ENCODE measurements at regions of chr5 and their contacts with region 1.

Region 1: GRCh38 chr5:146213210-146213826 is 9.9 kb downstream of the RBM27 start:
- DNase-seq: no peak
- ATAC-seq: no peak
- H3K4me3 Mint-ChIP-seq: no peak overlapping the region
- H3K27ac Mint-ChIP-seq: no peak overlapping the region
- H3K4me1 Mint-ChIP-seq: peaks cover 51% of the 10 kb centered on the region
- H3K27me3 Mint-ChIP-seq: no peaks in the 10 kb centered on the region
- CTCF ChIP-seq: no peak

Region 2: DNA sequence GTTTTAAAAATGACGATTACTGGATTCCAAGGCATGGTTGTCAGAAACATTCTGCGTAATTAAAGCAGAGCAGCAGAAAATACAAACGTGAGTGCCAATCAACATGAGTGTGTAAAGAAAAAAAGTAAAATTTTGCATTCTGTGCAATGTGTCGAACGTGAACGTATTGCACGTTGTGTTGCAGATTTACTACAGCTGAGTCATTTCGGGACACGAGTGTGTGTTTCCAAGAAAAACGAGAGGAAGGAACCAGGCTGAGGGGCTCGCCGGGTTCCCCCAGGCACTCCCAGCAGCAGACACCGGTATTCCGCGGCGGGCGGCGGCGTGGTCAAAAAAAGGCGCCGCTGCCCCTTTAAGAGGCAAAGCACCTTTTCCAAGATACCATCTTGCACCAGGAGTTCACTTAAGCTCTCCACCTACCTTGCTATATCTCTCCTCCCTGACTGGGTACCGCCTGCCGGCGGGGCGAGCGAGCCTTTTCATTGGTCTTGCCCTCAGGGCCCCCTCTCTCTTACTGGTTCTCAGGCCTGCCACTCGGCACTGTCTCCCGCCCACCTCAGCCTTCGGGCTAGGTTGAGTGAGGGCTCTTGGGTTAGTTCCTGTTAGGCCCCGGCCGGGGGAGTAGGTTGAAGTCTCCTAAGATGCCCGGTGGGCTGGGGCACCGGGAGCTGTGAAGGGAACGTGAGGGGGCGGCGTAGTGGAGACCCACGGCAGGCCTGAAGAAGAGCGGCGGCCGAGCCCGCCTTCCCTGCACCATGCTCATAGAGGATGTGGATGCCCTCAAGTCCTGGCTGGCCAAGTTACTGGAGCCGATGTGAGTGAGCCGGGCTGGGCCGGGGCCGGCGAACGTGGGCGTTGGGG is 10.1 kb before region 1 on chr5 and contains the start of gene RBM27:
- CTCF ChIA-PET with region 1: no interaction called
- POLR2A ChIA-PET with region 1: interaction called, 10 read pairs
- intact Hi-C with region 1: no loop called
- DNase-seq: peak; percentile 97
- ATAC-seq: peak; percentile 99
- H3K4me3 Mint-ChIP-seq: no peak within 1 kb of the TSS
- H3K27ac Mint-ChIP-seq: no peak within 1 kb of the TSS
- H3K4me1 Mint-ChIP-seq: peaks cover 14% of the 10 kb centered on the region
- H3K27me3 Mint-ChIP-seq: no peaks in the 10 kb centered on the region
- CTCF ChIP-seq: no peak
- total RNA-seq, gene RBM27: 29.1 to 29.3 TPM

Region 3: DNA sequence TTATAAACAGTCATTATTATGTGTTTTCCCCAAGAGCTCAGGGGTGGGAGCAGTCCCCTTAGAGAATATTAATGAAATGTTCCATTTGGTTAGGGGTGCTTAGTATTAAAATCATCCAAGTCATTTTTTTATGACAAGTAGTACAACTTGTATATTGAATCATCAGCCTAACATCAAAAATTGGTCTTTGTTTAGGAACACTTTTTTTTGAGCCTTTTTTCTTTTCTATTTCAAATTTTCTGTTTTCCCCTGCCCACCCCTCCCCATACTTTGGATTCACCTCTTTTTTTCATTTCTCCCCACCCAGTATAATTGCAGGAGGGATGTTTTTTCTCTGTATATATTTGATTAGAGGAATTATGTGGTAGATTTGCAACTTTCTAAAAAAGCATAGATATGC is 15.9 kb after region 1 on chr5:
- CTCF ChIA-PET with region 1: no interaction called
- POLR2A ChIA-PET with region 1: no interaction called
- intact Hi-C with region 1: no loop called
- DNase-seq: no peak
- ATAC-seq: no peak
- H3K4me3 Mint-ChIP-seq: no peak overlapping the region
- H3K27ac Mint-ChIP-seq: peak overlapping the region; percentile 10
- H3K4me1 Mint-ChIP-seq: no peaks in the 10 kb centered on the region
- H3K27me3 Mint-ChIP-seq: no peaks in the 10 kb centered on the region
- CTCF ChIP-seq: no peak

Region 4: DNA sequence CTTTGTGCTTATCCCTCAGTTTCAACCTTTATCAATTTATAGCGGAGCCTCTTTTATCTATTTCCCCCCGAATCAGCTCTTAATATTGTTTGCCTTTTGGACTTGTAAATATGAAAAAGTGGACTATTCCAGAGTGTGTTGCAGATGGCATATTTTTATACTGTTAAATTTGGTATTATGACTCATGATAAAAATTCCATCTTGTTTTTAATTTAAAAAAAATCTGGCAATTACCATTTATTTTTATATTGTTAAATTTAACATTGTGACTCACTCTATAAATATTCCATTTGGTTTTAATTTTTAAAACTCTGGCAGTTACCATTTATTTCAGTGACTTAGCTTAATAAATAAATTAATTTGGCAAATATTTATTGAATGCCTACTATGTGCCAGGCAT is 27.6 kb after region 1 on chr5:
- CTCF ChIA-PET with region 1: no interaction called
- POLR2A ChIA-PET with region 1: no interaction called
- intact Hi-C with region 1: loop called (anchors 5 kb)
- DNase-seq: no peak
- ATAC-seq: no peak
- H3K4me3 Mint-ChIP-seq: no peak overlapping the region
- H3K27ac Mint-ChIP-seq: no peak overlapping the region
- H3K4me1 Mint-ChIP-seq: peaks cover 18% of the 10 kb centered on the region
- H3K27me3 Mint-ChIP-seq: no peaks in the 10 kb centered on the region
- CTCF ChIP-seq: no peak